Right ventricle myocardium inferior (tissue), 1 donor: ENCODE measurements at regions of chr6 and their contacts with region 1.

Region 1: DNA sequence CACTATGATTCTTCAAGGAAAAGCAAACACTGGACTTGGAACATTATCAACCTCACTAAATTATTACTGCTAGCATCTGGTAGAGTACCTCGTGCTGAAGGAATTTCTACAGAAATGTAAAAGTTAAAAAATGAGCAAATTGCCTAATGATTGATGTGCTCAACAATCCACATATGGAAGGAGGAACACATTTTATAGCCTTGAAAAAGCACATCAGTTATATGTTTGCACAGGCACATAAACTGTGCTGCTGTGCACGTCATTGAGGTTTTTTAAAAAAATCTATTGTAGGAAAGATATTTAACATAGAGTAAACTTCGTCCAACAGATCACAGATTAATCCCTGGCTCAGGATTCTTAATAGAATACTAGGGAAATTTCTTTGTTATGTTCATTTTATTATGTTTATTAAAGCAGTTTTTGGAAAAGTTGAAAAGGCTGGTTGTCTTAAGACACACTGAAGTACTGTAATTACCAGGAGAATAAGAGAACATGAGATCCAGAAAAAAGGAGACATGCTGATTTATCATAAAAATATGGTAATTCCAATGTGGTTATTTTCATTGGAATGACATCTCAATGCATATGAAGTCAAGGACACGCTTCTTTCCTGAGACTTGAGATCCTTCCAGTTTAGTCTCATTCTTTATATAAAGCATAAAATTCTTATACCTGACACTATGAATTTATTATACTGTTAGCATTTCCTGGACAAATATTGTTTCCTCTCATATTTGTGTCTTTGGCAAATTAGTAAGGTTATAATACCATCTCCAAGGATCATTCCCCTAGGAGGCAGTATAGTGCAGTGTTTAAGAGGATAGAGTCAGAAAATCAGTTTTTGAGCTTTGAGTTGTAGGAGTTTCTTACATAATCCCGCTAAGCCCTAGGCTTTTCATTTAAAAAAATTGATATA is 511.1 kb downstream of the TENT5A start:
- DNase-seq: no peak
- ATAC-seq: no peak

Region 2: DNA sequence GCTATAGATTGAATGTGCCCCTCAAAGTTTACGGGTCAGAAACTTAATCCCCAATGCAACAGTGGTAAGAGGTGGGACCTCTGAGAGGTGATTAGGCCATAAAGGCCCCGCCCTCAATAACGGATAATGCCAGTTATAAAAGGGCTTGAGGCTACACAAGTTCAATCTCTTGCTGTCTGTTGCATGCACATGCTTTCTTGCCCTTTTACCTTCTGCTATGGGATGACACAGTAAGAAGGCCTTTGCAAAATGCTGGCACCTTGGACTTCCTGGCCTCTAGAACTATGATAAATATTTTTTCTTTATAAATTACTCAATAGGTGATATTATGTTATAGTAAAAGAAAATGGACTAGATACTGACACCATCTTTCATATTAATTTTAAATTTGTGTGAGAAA is 295.0 kb before region 1 on chr6:
- intact Hi-C with region 1: no loop called
- DNase-seq: no peak
- ATAC-seq: no peak

Region 3: GRCh38 chr6:81465859-81466258 is 224.5 kb after region 1 on chr6:
- intact Hi-C with region 1: loop called (anchors 10 kb)
- DNase-seq: no peak
- ATAC-seq: no peak